Naive thymus-derived CD4-positive, alpha-beta T cell (primary cell): ENCODE measurements at regions of chr20 and their contacts with region 1.

Region 1: GRCh38 chr20:36460648-36461599 is 80.4 kb upstream of the MYL9 start:
- DNase-seq: peak; percentile 76 to 89 (median 86)
- ATAC-seq: peak; percentile 93
- H3K4me3 ChIP-seq: peak overlapping the region; percentile 73
- H3K4me3 Mint-ChIP-seq: peak overlapping the region; percentile 74 to 97 (median 83)
- H3K27ac ChIP-seq: peak overlapping the region; percentile 85
- H3K27ac Mint-ChIP-seq: peak overlapping the region; percentile 88 to 97 (median 95)
- H3K4me1 ChIP-seq: peaks cover 38 to 39% of the 10 kb centered on the region in 2 donors
- H3K4me1 Mint-ChIP-seq: peaks cover 34 to 51% (median 45%) of the 10 kb centered on the region in 7 donors
- H3K27me3 ChIP-seq: no peaks in the 10 kb centered on the region
- H3K27me3 Mint-ChIP-seq: peaks cover 0 to 6% (median 0%) of the 10 kb centered on the region in 5 donors

Region 2: DNA sequence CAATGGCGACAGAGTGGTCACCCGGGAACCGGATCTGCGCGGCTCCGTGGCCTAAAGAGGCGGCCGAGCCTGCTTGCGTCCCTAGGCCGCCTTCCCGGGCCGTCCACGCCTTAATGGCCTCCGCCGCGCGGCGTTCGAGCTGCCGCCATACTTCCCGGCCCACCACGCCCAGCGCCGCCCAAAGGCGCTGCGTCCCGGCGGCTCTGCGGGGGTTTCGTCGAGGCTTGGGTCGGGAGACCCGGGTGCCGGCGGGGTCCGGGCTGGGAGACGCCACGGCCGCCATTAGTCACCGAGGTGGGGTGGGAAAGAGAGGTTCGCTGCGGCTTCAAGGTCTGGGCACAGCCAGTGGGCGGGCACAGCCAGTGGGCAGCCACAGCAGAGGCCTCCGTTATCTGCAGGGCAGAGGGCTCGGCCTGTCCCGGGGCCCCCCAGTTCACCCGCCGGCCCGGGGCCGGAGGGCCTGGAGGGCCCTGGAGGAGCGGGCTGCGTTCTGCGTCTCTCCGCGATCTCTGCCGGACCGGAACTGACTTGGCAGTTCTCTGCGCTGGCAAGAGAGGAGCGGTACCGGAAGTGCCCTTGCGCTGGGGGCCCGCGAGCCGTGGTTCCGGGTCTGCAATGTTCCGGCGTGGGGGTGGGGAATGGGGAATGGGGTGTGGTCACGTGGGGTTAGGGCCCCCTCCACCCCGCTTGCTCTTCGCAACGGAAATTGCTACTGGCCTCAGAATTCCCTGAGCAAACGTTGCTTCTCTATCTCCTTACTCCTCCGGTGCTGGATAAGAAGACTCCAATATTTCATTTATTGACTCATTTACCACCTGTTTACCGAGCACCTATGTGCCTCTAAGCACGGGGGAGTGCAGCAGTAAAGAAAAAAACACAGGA is 410.2 kb before region 1 on chr20:
- CTCF ChIA-PET with region 1: no interaction called
- POLR2A ChIA-PET with region 1: no interaction called
- intact Hi-C with region 1: loop called in 1 of 2 experiments (anchors 5 kb)
- DNase-seq: peak; percentile 72 to 89 (median 83)
- ATAC-seq: peak; percentile 97
- H3K4me3 ChIP-seq: peak overlapping the region; percentile 91
- H3K4me3 Mint-ChIP-seq: peak overlapping the region; percentile 86 to 98 (median 92)
- H3K27ac ChIP-seq: peak overlapping the region; percentile 91
- H3K27ac Mint-ChIP-seq: peak overlapping the region; percentile 85 to 96 (median 92)
- H3K4me1 ChIP-seq: peaks cover 6 to 12% of the 10 kb centered on the region in 2 donors
- H3K4me1 Mint-ChIP-seq: peaks cover 35 to 55% (median 49%) of the 10 kb centered on the region in 7 donors
- H3K27me3 ChIP-seq: no peaks in the 10 kb centered on the region
- H3K27me3 Mint-ChIP-seq: peaks cover 0 to 14% (median 3%) of the 10 kb centered on the region in 5 donors

Region 3: DNA sequence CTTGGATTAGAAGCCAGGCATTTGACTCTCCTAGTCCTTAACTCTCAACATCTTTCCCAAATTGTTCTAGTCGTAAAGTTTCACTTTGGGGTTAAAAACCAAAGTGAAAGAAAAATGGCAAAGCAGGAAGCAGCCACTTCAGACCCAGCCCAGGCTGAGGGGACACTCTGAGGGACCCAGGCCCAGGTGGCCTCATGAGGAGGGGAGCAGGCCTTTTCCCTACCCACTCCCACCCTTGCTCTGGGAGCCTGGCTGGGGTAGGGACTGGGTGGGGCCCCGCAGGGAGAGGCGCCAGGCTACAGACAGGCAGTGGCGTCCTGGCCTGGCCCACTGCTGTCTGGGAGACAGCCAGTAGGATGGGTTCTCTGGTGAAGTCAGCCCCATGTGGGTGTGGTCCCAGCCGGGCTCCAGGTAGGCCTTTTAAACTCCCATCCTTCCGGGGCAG is 11.7 kb after region 1 on chr20:
- CTCF ChIA-PET with region 1: interaction called, 4 read pairs
- POLR2A ChIA-PET with region 1: interaction called, 4 read pairs
- intact Hi-C with region 1: loop called in 1 of 2 experiments (anchors 1 kb)
- DNase-seq: peak in 4 of 9 donors; percentile 32 to 48 (median 40)
- ATAC-seq: peak; percentile 86
- H3K4me3 ChIP-seq: peak overlapping the region; percentile 41
- H3K4me3 Mint-ChIP-seq: peak overlapping the region; percentile 62 to 84 (median 74)
- H3K27ac ChIP-seq: peak overlapping the region; percentile 65
- H3K27ac Mint-ChIP-seq: peak overlapping the region; percentile 78 to 93 (median 86)
- H3K4me1 ChIP-seq: peaks cover 6 to 33% of the 10 kb centered on the region in 2 donors
- H3K4me1 Mint-ChIP-seq: peaks cover 40 to 67% (median 58%) of the 10 kb centered on the region in 7 donors
- H3K27me3 ChIP-seq: no peaks in the 10 kb centered on the region
- H3K27me3 Mint-ChIP-seq: no peaks in the 10 kb centered on the region

Region 4: DNA sequence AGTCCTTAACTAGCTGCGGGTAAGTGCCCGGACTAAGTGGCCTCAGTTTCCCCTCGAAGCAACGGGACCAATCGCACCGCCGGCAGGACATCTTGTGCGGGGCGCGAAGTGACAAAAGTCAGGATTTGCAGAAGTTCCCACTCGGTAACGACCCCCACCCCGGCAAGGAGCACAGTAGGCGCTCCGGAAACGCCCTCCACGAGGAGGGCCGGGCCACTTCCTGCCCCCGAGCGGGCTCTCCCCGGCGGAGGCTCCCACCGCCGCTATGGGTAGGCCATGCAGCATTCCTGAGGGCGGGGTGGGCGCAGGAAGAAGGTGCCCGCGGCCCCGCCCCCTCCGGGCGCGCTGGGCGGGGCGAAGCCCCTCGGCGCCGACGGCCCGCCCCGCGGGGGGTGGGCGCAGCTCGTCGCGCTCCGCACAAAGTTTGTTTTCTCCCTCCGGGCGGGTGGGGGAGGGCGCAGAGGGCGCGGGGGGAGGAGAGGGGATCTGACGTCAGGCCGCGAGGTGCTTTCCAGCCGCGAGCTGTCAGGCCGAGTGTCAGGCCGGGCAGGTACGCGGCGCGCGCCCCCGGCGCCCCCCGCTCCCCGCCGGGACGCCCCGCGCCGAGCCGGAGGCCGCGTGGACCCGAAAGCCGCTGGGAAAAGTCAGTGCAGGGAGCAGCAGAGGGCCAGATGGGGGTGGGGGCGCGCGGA is 112.3 kb after region 1 on chr20 and contains the start of gene TGIF2:
- CTCF ChIA-PET with region 1: no interaction called
- POLR2A ChIA-PET with region 1: interaction called, 3 read pairs
- intact Hi-C with region 1: loop called (anchors 1 to 2 kb)
- DNase-seq: peak; percentile 86 to 93 (median 91)
- ATAC-seq: peak; percentile 84
- H3K4me3 ChIP-seq: peak within 1 kb of the TSS; percentile 70
- H3K4me3 Mint-ChIP-seq: peak within 1 kb of the TSS; percentile 88 to 97 (median 92)
- H3K27ac ChIP-seq: peak within 1 kb of the TSS; percentile 100
- H3K27ac Mint-ChIP-seq: peak within 1 kb of the TSS; percentile 96 to 100 (median 99)
- H3K4me1 ChIP-seq: peaks cover 13 to 34% of the 10 kb centered on the region in 2 donors
- H3K4me1 Mint-ChIP-seq: peaks cover 27 to 49% (median 40%) of the 10 kb centered on the region in 7 donors
- H3K27me3 ChIP-seq: no peaks in the 10 kb centered on the region
- H3K27me3 Mint-ChIP-seq: no peaks in the 10 kb centered on the region
- total RNA-seq, gene TGIF2: 35.6 to 44.3 (median 40.7) TPM

Region 5: DNA sequence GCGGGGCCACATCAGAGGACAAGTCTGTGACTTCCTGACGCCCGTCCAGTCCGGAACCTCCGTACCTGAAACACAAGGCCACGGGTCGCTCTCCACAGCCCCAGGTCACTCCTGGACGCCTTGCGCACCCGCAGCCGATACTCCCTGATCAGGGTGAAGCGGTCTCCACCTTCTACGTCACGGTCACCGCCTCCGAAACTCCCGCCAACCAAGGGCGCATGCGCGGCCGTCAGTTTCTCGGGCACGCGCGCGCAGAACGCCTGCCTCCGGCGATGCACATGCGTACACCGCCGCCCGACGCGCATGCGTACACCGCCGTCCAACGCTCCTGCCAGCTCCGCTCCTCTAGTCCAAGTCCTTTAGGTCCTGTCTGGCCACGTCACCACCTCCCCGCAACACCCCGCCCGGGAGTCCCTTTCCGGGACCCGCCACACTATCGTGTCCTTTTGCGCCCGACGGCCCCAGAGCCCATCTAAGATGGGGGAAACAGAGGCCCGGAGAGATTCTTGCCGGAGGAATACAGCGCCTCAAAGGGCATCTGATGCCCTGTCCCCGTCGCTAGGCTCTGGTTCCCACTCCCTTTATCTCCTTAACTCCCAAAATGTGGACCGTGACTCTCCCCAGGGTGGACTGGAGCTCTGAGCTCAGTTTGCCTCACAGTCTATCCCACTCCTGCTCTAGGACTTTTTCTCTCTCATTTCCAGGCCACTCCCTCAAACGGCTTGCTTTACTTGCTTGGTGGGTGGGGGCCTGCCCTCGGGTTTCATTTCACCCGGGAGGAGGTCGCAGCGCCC is 312.9 kb after region 1 on chr20 and contains the start of gene DSN1:
- CTCF ChIA-PET with region 1: no interaction called
- POLR2A ChIA-PET with region 1: interaction called, 7 read pairs
- intact Hi-C with region 1: loop called (anchors 1 to 2 kb)
- DNase-seq: peak; percentile 94 to 100 (median 97)
- ATAC-seq: peak; percentile 90
- H3K4me3 ChIP-seq: peak within 1 kb of the TSS; percentile 96
- H3K4me3 Mint-ChIP-seq: peak within 1 kb of the TSS; percentile 83 to 98 (median 95)
- H3K27ac ChIP-seq: peak within 1 kb of the TSS; percentile 93
- H3K27ac Mint-ChIP-seq: peak within 1 kb of the TSS; percentile 90 to 100 (median 97)
- H3K4me1 ChIP-seq: peaks cover 8 to 13% of the 10 kb centered on the region in 2 donors
- H3K4me1 Mint-ChIP-seq: peaks cover 8 to 36% (median 27%) of the 10 kb centered on the region in 7 donors
- H3K27me3 ChIP-seq: no peaks in the 10 kb centered on the region
- H3K27me3 Mint-ChIP-seq: peaks cover 0 to 2% (median 0%) of the 10 kb centered on the region in 5 donors
- total RNA-seq, gene DSN1: 9.2 to 27.5 (median 13.4) TPM

Region 6: DNA sequence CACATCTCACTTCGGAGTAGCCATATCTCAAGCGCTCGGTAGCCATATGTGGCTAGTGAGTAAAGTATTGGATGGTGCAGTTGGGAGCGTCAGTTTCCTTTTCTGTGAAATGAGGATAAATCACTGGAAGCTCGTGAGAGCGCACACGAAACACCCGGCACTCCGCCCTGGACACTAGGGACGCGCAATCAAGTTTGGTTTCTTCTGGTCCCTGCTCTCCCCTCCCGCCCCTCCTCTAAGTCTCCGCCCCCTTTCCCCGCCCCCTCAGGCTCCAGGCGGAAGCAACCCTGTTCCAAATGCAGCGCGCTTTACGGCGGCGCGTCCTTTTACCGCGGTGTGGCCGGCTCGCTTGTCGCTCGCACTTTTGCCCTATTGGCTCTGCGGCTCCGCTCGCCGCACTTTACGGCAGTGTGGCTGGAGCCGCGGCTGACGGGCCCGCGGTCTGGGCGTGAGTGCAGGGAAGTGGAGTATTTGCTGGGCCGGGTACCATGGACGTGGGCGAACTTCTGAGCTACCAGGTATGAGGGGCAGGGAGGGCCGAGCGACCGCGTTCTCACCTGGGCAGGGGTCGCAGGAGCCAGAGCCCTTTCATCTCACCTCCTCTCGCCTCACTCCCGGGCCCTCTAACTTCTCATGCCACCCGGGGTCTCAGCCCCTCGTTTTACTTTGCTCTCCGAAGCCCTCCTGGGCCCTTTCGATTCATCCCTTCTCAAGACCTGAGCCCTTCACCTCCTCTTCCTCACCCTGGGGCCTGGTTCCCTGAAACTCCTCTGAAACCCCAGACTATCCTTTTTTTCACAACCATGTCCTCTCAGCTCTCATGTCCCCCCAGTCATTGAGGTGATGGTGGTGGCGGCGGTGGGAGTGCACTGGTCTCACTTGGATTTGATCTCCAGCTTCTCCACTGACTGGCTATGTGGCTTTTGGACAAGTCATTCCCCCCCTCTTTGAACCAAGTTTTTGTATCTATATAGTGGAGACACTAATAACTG is 1233.0 kb after region 1 on chr20 and contains the start of gene CTNNBL1:
- CTCF ChIA-PET with region 1: no interaction called
- POLR2A ChIA-PET with region 1: no interaction called
- intact Hi-C with region 1: loop called in 1 of 2 experiments (anchors 10 kb)
- DNase-seq: peak; percentile 83 to 94 (median 93)
- ATAC-seq: peak; percentile 99
- H3K4me3 ChIP-seq: peak within 1 kb of the TSS; percentile 80
- H3K4me3 Mint-ChIP-seq: peak within 1 kb of the TSS; percentile 96 to 100 (median 99)
- H3K27ac ChIP-seq: peak within 1 kb of the TSS; percentile 76
- H3K27ac Mint-ChIP-seq: peak within 1 kb of the TSS; percentile 87 to 96 (median 93)
- H3K4me1 ChIP-seq: peaks cover 9 to 20% of the 10 kb centered on the region in 2 donors
- H3K4me1 Mint-ChIP-seq: peaks cover 19 to 53% (median 42%) of the 10 kb centered on the region in 7 donors
- H3K27me3 ChIP-seq: no peaks in the 10 kb centered on the region
- H3K27me3 Mint-ChIP-seq: peaks cover 12 to 22% (median 16%) of the 10 kb centered on the region in 5 donors
- total RNA-seq, gene CTNNBL1: 41.7 to 72.9 (median 49.1) TPM